ENCODE measurements at regions of chr19 and their contacts with region 1.

Region 1: GRCh38 chr19:44723952-44724319 is 24.6 kb upstream of the BCL3 start:
- DNase-seq: no peak
- H3K4me3 ChIP-seq: no peak overlapping the region
- H3K27me3 ChIP-seq: no peaks in the 10 kb centered on the region
- CTCF ChIP-seq: peak; percentile 98

Region 2: GRCh38 chr19:44570984-44571684 is 152.8 kb before region 1 on chr19:
- CTCF ChIA-PET with region 1: interaction called, 12 read pairs
- POLR2A ChIA-PET with region 1: no interaction called
- DNase-seq: peak; percentile 19
- H3K4me3 ChIP-seq: no peak overlapping the region
- H3K27me3 ChIP-seq: peaks cover 11% of the 10 kb centered on the region
- CTCF ChIP-seq: peak; percentile 72

Region 3: GRCh38 chr19:44707794-44708193 is 16.1 kb before region 1 on chr19:
- CTCF ChIA-PET with region 1: interaction called, 15 read pairs
- POLR2A ChIA-PET with region 1: no interaction called
- DNase-seq: no peak
- H3K4me3 ChIP-seq: no peak overlapping the region
- H3K27me3 ChIP-seq: no peaks in the 10 kb centered on the region; the same call in 1 of the 2 replicates
- CTCF ChIP-seq: no peak

Region 4: DNA sequence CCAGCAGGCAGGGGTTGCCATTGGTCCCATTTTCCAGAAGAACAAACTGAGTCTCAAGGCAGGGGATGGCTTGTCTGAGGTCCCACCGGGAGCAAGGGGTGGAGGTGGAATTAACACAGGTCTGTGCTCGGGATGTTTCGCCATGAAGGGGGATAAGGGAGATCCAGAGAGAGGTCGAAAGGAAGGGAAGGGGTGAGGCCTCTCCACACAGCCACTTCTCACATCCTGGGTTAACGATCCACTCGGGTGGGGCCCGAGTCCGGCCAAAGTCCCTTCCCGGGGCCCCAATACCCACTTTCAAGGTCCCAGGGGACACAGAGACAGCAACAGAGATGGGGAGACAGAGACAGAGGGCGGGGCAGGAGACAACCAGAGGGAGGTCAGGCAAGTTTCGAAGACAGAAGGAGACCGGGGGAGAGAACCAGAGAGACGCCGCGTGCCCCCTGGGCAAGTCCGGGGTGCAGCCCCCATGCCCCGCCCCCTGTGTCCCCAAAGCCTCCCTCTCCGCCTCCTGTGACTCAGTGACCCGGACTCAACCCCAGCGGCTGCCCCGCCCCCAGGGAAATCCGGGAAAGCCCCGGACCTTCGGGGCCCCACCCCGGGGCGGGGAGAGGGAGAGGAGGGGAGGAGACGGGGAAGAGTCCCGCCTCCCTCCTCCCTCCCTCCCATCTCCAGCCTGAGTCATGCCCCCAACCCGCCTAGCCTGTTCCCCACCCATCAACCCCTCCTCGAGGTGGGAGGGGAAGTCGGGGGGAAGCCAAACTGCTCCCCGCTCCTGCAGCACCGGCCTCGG is 23.2 kb after region 1 on chr19:
- CTCF ChIA-PET with region 1: interaction called, 69 read pairs
- POLR2A ChIA-PET with region 1: no interaction called
- DNase-seq: peak; percentile 84
- H3K4me3 ChIP-seq: peak overlapping the region; percentile 73
- H3K27me3 ChIP-seq: no peaks in the 10 kb centered on the region
- CTCF ChIP-seq: no peak

Region 5: DNA sequence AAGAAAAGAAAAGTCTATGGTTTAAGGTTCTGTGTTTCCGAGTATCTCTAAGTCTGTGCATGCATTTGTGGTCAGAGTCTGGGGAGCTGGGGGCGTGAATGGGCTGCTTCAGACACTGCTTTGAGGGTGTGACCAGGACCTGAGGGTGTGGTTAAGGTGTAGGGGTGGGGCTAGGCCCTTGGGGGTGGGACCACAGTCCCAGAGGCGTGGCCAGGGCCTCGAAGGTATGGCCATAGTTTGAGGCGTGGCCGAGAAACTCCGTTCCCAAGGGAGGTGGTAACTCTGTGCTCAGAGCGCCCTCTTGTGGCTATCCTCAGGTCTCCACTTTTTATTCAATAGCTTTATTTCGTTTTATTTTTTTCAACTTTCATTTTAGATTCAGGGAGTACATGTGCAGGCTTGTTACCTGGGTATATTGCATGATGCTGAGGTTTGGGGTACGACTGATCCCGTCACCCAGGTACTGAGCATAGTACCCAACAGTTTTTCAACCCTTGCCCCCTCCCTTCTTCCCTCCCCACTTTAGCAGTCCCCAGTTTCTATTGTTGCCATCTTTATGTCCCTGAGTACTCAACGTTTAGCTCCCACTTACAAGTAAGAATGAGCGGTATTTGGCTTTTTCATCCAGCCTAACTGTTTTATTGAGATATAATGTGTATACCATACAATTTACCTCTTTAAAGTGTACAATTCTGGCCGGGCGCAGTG is 46.8 kb after region 1 on chr19:
- CTCF ChIA-PET with region 1: interaction called, 369 read pairs
- POLR2A ChIA-PET with region 1: interaction called, 6 read pairs
- DNase-seq: peak; percentile 44
- H3K4me3 ChIP-seq: no peak overlapping the region
- H3K27me3 ChIP-seq: no peaks in the 10 kb centered on the region
- CTCF ChIP-seq: peak; percentile 72

Region 6: GRCh38 chr19:44845612-44846454 is 121.9 kb after region 1 on chr19 and contains the start of gene NECTIN2:
- CTCF ChIA-PET with region 1: interaction called, 21 read pairs
- POLR2A ChIA-PET with region 1: interaction called, 8 read pairs
- DNase-seq: peak; percentile 81
- H3K4me3 ChIP-seq: peak within 1 kb of the TSS; percentile 69
- H3K27me3 ChIP-seq: no peaks in the 10 kb centered on the region
- CTCF ChIP-seq: peak; percentile 84
- polyA plus RNA-seq, gene NECTIN2: 80.6 and 107 TPM in 2 replicates